ENCODE measurements at regions of chr21 and their contacts with region 1.

Region 1: GRCh38 chr21:33924079-33924765 is 8.6 kb upstream of the ATP5PO start:
- DNase-seq: peak; percentile 78 to 85 (median 80)
- H3K4me3 ChIP-seq: no peak overlapping the region
- H3K27ac ChIP-seq: no peak overlapping the region
- H3K4me1 ChIP-seq: peaks cover 0 to 8% (median 0%) of the 10 kb centered on the region in 4 experiments
- H3K27me3 ChIP-seq: no peaks in the 10 kb centered on the region

Region 2: DNA sequence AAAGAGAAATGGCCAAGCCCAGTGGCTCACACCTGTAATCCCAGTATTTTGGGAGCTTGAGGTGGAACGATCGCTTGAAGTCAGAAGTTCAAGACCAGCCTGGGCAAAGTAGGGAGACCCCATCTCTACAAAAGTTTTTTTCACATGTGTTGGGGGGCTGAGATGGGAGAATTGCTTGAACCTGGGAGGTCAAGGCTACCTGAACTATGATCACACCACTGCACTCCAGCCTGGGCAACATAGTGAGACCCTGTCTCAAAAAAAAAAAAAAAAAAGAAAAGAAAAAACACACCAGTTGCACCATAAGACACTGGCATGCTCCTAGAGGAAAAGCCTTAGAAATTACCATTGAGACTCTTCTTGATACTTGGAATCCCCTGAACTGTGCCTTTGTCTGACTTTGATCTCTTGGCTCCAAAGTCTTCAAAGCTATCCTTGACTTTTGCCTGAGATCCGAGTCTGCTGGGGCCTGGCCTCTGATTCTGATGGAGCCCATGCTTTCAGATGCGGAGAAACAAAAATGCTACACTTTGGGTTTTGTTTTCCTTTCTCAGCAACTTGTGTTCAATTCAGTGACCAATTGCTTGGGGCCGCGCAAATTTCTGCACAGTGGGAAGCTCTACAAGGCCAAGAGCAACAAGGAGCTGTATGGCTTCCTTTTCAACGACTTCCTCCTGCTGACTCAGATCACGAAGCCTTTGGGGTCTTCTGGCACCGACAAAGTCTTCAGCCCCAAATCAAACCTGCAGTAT is 42.4 kb before region 1 on chr21:
- CTCF ChIA-PET with region 1: no interaction called
- POLR2A ChIA-PET with region 1: no interaction called
- DNase-seq: no peak
- H3K4me3 ChIP-seq: no peak overlapping the region
- H3K27ac ChIP-seq: no peak overlapping the region
- H3K4me1 ChIP-seq: no peaks in the 10 kb centered on the region
- H3K27me3 ChIP-seq: peaks cover 0 to 2% (median 0%) of the 10 kb centered on the region in 5 experiments

Region 3: DNA sequence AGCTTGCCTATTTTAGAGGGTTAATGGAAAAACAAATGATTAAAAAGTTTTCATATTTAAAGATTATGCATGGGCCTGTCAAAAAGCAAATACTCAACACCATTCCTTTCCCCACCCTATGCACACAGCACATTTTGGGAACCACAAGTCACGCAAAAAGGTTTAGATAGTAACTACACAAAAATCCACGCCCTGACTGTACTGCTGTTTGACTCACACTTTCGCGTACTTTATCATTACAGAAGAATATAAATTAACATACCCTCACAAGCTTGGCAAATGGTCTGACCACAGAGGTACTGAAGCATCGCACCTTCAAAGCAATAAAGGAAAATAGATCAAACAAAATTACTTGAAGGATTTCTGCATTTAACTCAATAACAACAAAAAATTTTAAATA is 10.0 kb before region 1 on chr21:
- CTCF ChIA-PET with region 1: interaction called, 17 read pairs
- POLR2A ChIA-PET with region 1: no interaction called
- DNase-seq: no peak
- H3K4me3 ChIP-seq: peak overlapping the region in 3 of 7 experiments; percentile 42 to 99 (median 99)
- H3K27ac ChIP-seq: no peak overlapping the region
- H3K4me1 ChIP-seq: peaks cover 10 to 16% (median 13%) of the 10 kb centered on the region in 4 experiments
- H3K27me3 ChIP-seq: no peaks in the 10 kb centered on the region

Region 4: DNA sequence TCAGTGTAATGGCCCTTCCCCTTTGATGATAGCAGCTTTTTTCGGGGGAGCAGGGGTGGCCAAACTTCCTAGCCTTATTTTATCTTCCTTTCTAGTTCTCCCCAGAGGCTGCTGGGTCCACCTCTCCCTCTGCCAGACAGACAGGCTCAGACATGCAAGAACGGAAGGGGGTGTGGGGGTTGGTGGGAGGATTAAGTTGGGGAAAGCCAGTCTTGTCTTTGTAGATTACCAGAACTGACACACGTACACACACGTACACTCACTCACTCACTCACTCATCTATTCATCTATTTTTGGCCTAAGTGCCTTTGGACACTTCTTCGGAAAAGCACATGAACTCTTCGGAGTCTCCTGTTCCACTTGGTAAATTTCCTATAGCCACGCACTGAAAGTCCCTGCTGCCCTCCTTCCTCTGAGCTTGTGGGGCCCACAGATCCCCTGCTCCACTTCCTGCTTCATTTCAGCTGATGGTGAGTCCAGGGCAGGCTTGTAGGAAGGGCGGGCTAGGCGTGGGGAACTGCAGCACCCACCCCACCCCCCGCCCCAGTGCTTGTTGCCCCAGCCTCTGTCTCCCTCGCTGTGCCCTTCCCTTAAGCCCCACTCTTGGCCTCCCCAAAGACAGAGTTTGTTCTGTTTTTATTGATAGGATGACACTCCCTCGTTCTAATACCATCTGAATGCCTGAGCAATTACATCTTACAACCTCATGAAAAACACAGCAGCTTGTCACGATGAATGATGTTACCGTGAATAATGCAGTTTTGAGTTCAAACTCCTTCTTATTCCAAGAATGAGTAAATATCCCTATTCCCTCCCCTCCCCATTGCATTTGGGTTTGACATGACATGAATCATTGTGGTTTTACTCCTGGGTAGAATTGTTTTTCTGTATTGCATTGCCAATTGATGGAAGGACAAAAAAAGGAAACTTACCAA is 52.1 kb after region 1 on chr21:
- CTCF ChIA-PET with region 1: interaction called, 12 read pairs
- POLR2A ChIA-PET with region 1: no interaction called
- DNase-seq: peak; percentile 32 to 83 (median 69)
- H3K4me3 ChIP-seq: peak overlapping the region in 3 of 7 experiments; percentile 43 to 53 (median 48)
- H3K27ac ChIP-seq: peak overlapping the region; percentile 52 to 80
- H3K4me1 ChIP-seq: peaks cover 13 to 36% (median 26%) of the 10 kb centered on the region in 4 experiments
- H3K27me3 ChIP-seq: no peaks in the 10 kb centered on the region

Region 5: GRCh38 chr21:34017039-34017961 is 93.1 kb after region 1 on chr21:
- CTCF ChIA-PET with region 1: no interaction called
- POLR2A ChIA-PET with region 1: no interaction called
- DNase-seq: no peak
- H3K4me3 ChIP-seq: no peak overlapping the region
- H3K27ac ChIP-seq: no peak overlapping the region
- H3K4me1 ChIP-seq: peaks cover 3 to 18% (median 15%) of the 10 kb centered on the region in 4 experiments
- H3K27me3 ChIP-seq: peaks cover 0 to 2% (median 0%) of the 10 kb centered on the region in 5 experiments

Region 6: DNA sequence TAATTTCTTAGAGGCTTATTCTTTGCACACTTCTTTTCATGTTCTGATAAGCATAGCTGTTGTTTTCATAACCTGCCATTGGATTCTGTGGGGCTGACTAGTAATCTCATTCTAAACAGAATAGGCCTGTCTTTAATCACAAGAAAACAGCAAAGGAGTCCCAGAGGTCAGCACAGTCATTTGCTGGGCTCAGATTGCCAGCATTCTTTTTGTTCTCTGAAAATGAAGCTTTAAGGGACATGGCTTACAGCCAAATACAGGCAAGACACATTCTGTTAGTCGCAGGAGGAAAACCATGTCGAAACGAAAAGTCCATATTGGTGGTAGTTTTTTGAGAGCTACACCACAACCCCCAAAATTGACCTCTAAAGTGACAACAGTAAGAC is 224.2 kb after region 1 on chr21:
- CTCF ChIA-PET with region 1: no interaction called
- POLR2A ChIA-PET with region 1: no interaction called
- DNase-seq: no peak
- H3K4me3 ChIP-seq: no peak overlapping the region
- H3K27ac ChIP-seq: no peak overlapping the region
- H3K4me1 ChIP-seq: no peaks in the 10 kb centered on the region
- H3K27me3 ChIP-seq: no peaks in the 10 kb centered on the region

Region 7: GRCh38 chr21:34202553-34203372 is 278.5 kb after region 1 on chr21:
- CTCF ChIA-PET with region 1: interaction called, 29 read pairs
- POLR2A ChIA-PET with region 1: no interaction called
- DNase-seq: peak in 2 of 3 donors; percentile 38 to 55
- H3K4me3 ChIP-seq: peak overlapping the region; percentile 38 to 85 (median 69)
- H3K27ac ChIP-seq: no peak overlapping the region
- H3K4me1 ChIP-seq: peaks cover 13 to 50% (median 25%) of the 10 kb centered on the region in 4 experiments
- H3K27me3 ChIP-seq: no peaks in the 10 kb centered on the region

Region 8: DNA sequence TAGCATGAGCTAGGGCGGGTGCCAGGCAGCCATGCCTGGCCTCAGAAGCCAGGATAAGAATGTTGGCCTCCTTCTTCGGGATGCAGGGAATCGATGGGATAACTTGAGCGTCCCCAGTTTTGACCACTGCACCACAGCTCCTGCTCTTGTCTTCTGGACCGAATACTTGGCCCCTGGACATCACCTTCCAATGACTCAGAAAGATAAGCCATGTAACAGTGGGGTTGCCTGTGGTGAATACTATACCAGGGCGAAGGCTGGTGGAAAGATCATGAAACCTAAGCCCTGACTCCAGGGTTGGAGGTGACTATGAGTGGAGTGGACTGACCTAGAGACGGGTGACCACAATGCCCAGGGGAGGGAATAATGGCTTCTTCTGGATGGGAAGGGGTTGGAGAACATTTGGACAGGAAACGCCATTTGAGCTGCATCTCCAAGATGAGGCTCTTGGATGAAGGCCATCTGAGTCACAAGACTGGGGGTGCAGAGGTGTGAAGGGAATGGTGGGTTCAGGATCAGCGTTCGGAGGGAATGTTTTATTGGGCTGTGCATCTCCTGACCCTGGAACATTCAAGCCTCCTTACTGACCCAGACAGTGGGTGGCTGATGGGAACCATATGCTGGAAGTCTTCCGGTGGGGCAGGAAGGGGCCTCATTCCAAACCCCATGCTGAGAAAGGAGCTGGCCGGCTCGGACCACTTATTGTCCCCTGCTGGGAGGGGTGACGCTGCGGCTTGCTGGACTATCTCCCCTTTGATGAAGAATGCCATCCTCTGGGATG is 421.1 kb after region 1 on chr21:
- CTCF ChIA-PET with region 1: interaction called, 112 read pairs
- POLR2A ChIA-PET with region 1: no interaction called
- DNase-seq: no peak
- H3K4me3 ChIP-seq: no peak overlapping the region
- H3K27ac ChIP-seq: no peak overlapping the region
- H3K4me1 ChIP-seq: no peaks in the 10 kb centered on the region
- H3K27me3 ChIP-seq: peaks cover 0 to 2% (median 0%) of the 10 kb centered on the region in 5 experiments